CD4-positive, alpha-beta memory T cell (primary cell): ENCODE measurements at regions of chr9 and their contacts with region 1.

Region 1: DNA sequence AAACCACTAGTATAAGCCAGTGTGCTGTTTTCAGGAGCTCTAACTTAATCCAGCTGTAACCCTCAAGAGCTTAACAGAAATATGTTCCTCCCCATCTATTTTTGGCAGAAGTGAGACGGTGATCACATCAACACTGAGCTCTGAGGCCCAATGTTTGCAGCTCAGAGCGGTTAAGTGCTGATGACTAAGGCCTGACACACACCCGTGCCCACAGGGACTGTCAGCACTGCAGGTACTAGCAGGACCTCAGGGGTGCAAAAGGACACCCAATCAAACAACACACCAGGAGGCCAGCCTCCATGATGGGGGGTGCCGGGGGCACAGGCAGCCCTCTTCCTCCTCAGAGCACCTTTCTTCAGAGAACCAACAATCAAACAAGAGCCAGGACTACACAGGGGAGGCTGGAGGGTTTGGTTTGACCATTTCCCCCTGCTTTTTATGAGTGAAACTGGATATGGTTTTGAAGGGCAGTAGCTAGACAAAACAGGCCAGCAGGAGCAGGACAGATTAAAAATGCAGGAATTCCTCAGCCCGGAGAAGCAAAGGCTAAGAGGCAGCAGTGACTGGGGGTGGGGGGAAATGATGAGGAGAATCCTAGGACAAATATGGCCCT is 61.3 kb downstream of the RAPGEF1 start:
- DNase-seq: peak; percentile 64 to 94 (median 73)
- H3K4me3 ChIP-seq: peak overlapping the region in 1 of 2 donors; percentile 30
- H3K4me3 Mint-ChIP-seq: peak overlapping the region; percentile 74 to 94 (median 90)
- H3K27ac ChIP-seq: peak overlapping the region; percentile 79
- H3K27ac Mint-ChIP-seq: peak overlapping the region; percentile 94 to 100 (median 98)
- H3K4me1 ChIP-seq: peaks cover 71% of the 10 kb centered on the region
- H3K4me1 Mint-ChIP-seq: peaks cover 74 to 100% (median 89%) of the 10 kb centered on the region in 4 donors
- H3K27me3 ChIP-seq: no peaks in the 10 kb centered on the region
- H3K27me3 Mint-ChIP-seq: no peaks in the 10 kb centered on the region

Region 2: DNA sequence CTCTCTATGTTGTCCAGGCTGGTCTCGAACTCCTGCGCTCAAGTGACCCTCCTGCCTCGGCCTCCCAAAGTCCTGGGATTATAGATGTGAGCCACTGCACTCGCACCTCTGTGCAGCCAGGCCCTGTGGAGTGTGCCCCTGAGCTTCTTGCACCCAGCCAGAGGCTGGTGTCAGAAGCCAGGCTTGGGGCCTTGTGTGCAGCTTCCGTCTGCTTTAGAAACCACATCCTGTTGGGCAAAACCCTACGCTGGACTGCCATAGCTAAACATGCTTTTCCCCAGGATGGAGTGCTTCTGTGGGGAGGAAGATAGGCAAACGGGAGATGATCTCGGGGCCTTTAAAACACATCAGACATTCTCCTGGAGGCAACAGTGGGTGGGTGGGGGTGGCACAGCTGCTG is 93.2 kb before region 1 on chr9:
- CTCF ChIA-PET with region 1: interaction called, 8 read pairs
- POLR2A ChIA-PET with region 1: interaction called, 12 read pairs
- intact Hi-C with region 1: no loop called
- DNase-seq: peak; percentile 56 to 77 (median 60)
- H3K4me3 ChIP-seq: no peak overlapping the region
- H3K4me3 Mint-ChIP-seq: peak overlapping the region; percentile 67 to 87 (median 78)
- H3K27ac ChIP-seq: peak overlapping the region; percentile 6
- H3K27ac Mint-ChIP-seq: peak overlapping the region; percentile 85 to 97 (median 92)
- H3K4me1 ChIP-seq: peaks cover 35% of the 10 kb centered on the region
- H3K4me1 Mint-ChIP-seq: peaks cover 24 to 57% (median 32%) of the 10 kb centered on the region in 4 donors
- H3K27me3 ChIP-seq: no peaks in the 10 kb centered on the region
- H3K27me3 Mint-ChIP-seq: no peaks in the 10 kb centered on the region

Region 3: DNA sequence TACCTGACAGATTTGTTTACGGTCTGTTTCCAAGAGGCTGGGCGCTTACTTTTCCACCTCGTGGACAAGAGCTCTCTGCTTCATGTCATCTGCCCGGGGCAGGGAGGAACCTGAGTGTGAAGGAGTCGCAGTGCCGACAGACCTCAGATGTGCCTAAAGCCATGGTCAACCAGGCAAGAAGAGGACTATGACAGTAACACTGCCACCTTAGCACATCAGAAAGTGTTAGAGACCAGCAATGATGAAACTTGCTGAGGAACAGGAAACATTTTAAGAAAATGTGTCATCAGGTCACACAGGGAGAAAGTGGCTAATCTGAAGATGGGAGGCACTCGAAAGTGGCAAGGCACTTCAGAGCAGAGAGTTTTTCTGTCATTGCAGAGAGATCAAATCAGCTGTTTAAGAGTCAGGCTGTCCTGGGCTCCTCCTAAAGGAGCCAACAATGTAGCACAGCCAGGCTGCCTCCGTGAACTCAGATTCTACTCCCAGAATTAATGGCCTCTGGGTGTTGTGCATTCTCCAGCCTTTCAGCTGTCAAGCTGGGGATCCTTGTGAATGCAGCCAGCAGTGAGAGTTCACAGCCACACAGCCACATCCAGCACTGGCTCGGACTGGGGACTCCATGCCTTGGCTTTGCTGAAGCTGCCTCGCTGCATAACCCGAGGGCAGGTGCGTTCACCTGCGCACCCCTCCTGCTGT is 33.4 kb before region 1 on chr9:
- CTCF ChIA-PET with region 1: interaction called, 10 read pairs
- POLR2A ChIA-PET with region 1: interaction called, 6 read pairs
- intact Hi-C with region 1: no loop called
- DNase-seq: no peak
- H3K4me3 ChIP-seq: no peak overlapping the region
- H3K4me3 Mint-ChIP-seq: peak overlapping the region in 5 of 8 donors; percentile 4 to 71 (median 45)
- H3K27ac ChIP-seq: peak overlapping the region; percentile 28
- H3K27ac Mint-ChIP-seq: peak overlapping the region; percentile 75 to 94 (median 86)
- H3K4me1 ChIP-seq: peaks cover 38% of the 10 kb centered on the region
- H3K4me1 Mint-ChIP-seq: peaks cover 26 to 73% (median 44%) of the 10 kb centered on the region in 4 donors
- H3K27me3 ChIP-seq: no peaks in the 10 kb centered on the region
- H3K27me3 Mint-ChIP-seq: no peaks in the 10 kb centered on the region

Region 4: GRCh38 chr9:131690950-131691573 is 12.5 kb after region 1 on chr9:
- CTCF ChIA-PET with region 1: interaction called, 20 read pairs
- POLR2A ChIA-PET with region 1: interaction called, 73 read pairs
- intact Hi-C with region 1: no loop called
- DNase-seq: peak; percentile 50 to 68 (median 55)
- H3K4me3 ChIP-seq: no peak overlapping the region
- H3K4me3 Mint-ChIP-seq: peak overlapping the region; percentile 41 to 76 (median 62)
- H3K27ac ChIP-seq: peak overlapping the region; percentile 23
- H3K27ac Mint-ChIP-seq: peak overlapping the region; percentile 30 to 94 (median 86)
- H3K4me1 ChIP-seq: peaks cover 91% of the 10 kb centered on the region
- H3K4me1 Mint-ChIP-seq: peaks cover 71 to 97% (median 88%) of the 10 kb centered on the region in 4 donors
- H3K27me3 ChIP-seq: no peaks in the 10 kb centered on the region
- H3K27me3 Mint-ChIP-seq: no peaks in the 10 kb centered on the region

Region 5: DNA sequence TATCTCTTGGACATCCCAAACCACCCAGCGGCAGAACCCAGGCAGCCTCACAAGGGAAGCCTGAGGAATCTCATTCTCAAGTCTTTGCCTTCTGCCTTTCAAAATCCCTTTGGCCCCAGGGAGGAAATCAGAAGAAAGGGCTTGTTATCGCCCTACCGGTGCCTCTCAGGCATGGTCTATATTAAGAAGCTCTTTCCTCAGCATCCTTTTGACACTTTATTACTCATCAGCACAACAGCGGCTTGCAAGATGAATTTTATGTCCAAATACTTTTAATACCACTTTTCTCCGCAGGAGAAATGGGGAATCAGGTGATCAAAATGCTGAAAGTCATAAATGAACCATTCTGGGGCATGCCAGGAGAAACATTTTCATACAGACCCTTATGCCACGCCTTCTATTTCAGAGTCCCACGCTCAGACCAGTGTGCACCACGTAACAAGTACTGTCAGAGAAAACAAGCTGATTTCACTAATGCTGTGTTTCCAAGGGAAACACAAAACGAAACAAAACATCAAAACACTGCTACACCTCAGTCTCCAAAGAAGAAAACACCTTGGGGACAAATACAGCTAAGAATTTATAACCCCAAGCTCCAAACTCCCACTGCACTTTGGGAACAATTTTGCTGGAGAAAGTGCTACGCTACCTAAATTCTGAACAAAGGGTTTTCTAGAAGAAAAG is 31.3 kb after region 1 on chr9:
- CTCF ChIA-PET with region 1: interaction called, 14 read pairs
- POLR2A ChIA-PET with region 1: interaction called, 38 read pairs
- intact Hi-C with region 1: no loop called
- DNase-seq: peak; percentile 77 to 92 (median 84)
- H3K4me3 ChIP-seq: peak overlapping the region in 1 of 2 donors; percentile 8
- H3K4me3 Mint-ChIP-seq: peak overlapping the region; percentile 73 to 82 (median 78)
- H3K27ac ChIP-seq: peak overlapping the region; percentile 81
- H3K27ac Mint-ChIP-seq: peak overlapping the region; percentile 97 to 100 (median 99)
- H3K4me1 ChIP-seq: peaks cover 84% of the 10 kb centered on the region
- H3K4me1 Mint-ChIP-seq: peaks cover 53 to 94% (median 77%) of the 10 kb centered on the region in 4 donors
- H3K27me3 ChIP-seq: no peaks in the 10 kb centered on the region
- H3K27me3 Mint-ChIP-seq: no peaks in the 10 kb centered on the region

Region 6: DNA sequence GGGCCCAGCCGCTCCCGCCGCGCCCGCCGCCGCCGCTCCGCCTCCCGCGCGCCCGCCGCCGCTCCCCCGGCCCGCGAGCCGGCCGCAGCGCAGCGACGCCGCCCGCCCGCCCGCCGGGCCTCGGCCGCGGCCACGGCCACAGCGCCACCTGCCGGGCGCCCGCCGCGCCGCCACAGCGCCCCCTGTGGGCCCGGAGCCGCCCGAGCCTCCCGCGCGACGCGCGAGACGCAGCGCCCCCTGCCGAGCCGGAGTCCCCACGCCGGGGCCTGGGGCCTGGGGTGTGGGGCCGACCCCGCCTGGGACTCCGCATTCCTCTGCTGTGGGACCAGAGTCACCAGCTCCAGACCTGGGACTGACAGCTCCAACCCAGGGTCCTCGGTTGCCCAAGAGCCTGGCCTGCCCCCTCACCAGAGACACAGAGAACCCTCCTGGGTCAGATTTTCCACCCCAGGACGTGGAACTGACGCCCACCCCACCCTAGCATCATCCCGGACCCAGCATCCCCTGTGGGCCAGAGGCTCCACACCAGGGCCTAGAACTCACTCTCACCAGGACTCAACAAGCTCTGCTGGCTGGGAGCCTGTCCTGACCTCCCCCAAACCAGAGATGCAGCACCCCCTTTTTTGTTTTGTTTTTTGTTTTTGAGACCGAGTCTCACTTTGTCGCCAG is 61.5 kb after region 1 on chr9 and contains the start of gene RAPGEF1:
- CTCF ChIA-PET with region 1: interaction called, 80 read pairs
- POLR2A ChIA-PET with region 1: interaction called, 692 read pairs
- intact Hi-C with region 1: no loop called
- DNase-seq: peak; percentile 66 to 89 (median 81)
- H3K4me3 ChIP-seq: peak within 1 kb of the TSS; percentile 31 to 67
- H3K4me3 Mint-ChIP-seq: peak within 1 kb of the TSS; percentile 92 to 98 (median 94)
- H3K27ac ChIP-seq: peak within 1 kb of the TSS; percentile 72
- H3K27ac Mint-ChIP-seq: peak within 1 kb of the TSS; percentile 91 to 98 (median 95)
- H3K4me1 ChIP-seq: peaks cover 68% of the 10 kb centered on the region
- H3K4me1 Mint-ChIP-seq: peaks cover 46 to 64% (median 55%) of the 10 kb centered on the region in 4 donors
- H3K27me3 ChIP-seq: no peaks in the 10 kb centered on the region
- H3K27me3 Mint-ChIP-seq: no peaks in the 10 kb centered on the region
- total RNA-seq, gene RAPGEF1: 129 to 149 TPM